Left ventricle myocardium inferior (tissue), 1 donor: ENCODE measurements at regions of chr9 and their contacts with region 1.

Region 1: GRCh38 chr9:99019790-99020331 is 76.2 kb downstream of the COL15A1 start:
- DNase-seq: no peak
- H3K4me3 ChIP-seq: no peak overlapping the region
- H3K27ac ChIP-seq: peak overlapping the region; percentile 66
- H3K4me1 ChIP-seq: peaks cover 32% of the 10 kb centered on the region
- H3K27me3 ChIP-seq: no peaks in the 10 kb centered on the region
- CTCF ChIP-seq: no peak

Region 2: DNA sequence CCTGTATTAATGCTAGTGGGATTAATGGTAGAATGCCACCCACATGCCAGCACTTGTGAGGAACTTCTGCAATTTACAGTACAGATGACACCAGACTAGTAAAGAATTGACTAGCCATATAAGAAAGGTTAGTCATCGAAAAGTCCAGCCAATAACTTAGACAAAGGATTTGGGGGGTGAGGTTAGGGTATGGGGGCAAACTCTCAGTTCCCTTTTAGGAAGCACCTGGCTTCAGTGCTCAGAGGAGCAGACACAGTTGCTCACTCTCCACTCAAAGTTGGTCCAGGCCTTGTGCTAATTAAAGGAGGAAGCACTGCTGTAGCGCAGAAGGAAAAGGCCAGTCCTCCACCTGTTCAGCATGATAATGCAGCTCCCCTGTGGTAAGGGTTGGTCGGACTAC is 110.2 kb after region 1 on chr9:
- intact Hi-C with region 1: loop called (anchors 10 kb)
- DNase-seq: no peak
- H3K4me3 ChIP-seq: no peak overlapping the region
- H3K27ac ChIP-seq: no peak overlapping the region
- H3K4me1 ChIP-seq: peaks cover 32% of the 10 kb centered on the region
- H3K27me3 ChIP-seq: no peaks in the 10 kb centered on the region
- CTCF ChIP-seq: no peak